AG04449 (cell line): ENCODE measurements at regions of chr2 and their contacts with region 1.

Region 1: GRCh38 chr2:36322108-36322507 is 33.5 kb upstream of the CRIM1 start:
- DNase-seq: no peak
- H3K4me3 ChIP-seq: no peak overlapping the region
- CTCF ChIP-seq: peak; percentile 69

Region 2: DNA sequence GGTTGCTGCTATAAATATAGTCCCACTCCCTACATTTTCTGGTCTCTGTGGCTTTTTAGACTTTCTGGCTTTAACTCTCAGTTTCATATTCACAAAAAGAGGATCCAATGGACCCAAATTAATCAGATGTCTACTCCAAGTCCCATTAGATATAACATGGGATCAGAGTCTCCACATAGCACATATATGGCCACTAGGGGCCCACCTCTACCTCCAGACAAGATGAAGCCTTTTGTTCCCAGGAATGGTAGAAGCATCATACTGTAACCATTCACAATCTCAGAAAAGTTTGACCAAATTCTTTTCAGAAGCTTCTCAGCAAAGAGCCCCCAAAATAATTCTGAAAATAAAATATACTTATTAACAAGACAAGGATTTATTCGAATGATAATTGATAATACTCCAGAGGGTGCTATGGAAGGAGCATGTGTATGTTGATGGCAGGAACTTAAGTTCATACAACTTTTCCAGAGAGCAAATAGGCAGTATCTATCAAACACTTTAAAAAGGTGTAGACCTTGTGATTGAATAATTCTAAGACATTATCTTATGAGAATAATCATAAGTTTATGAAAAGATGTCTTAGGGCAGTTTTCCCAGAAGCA is 348.9 kb before region 1 on chr2:
- CTCF ChIA-PET with region 1: interaction called, 13 read pairs
- POLR2A ChIA-PET with region 1: no interaction called
- DNase-seq: no peak
- H3K4me3 ChIP-seq: no peak overlapping the region
- CTCF ChIP-seq: peak; percentile 56